ENCODE measurements at regions of chr3 and their contacts with region 1.

Region 1: GRCh38 chr3:112074721-112075497 is 11.3 kb upstream of the C3orf52 start:
- DNase-seq: peak in 8 of 9 donors; percentile 29 to 60 (median 52)
- ATAC-seq: peak; percentile 88
- H3K4me3 ChIP-seq: no peak overlapping the region
- H3K4me3 Mint-ChIP-seq: peak overlapping the region; percentile 32 to 76 (median 56)
- H3K27ac ChIP-seq: peak overlapping the region; percentile 32
- H3K27ac Mint-ChIP-seq: peak overlapping the region; percentile 72 to 95 (median 85)
- H3K4me1 ChIP-seq: peaks cover 4 to 17% of the 10 kb centered on the region in 2 donors
- H3K4me1 Mint-ChIP-seq: peaks cover 17 to 57% (median 51%) of the 10 kb centered on the region in 7 donors
- H3K27me3 ChIP-seq: no peaks in the 10 kb centered on the region
- H3K27me3 Mint-ChIP-seq: peaks cover 0 to 3% (median 0%) of the 10 kb centered on the region in 5 donors

Region 2: GRCh38 chr3:111547631-111548030 is 527.3 kb before region 1 on chr3:
- CTCF ChIA-PET with region 1: no interaction called
- POLR2A ChIA-PET with region 1: interaction called, 3 read pairs
- intact Hi-C with region 1: loop called (anchors 5 to 10 kb)
- DNase-seq: peak in 8 of 9 donors; percentile 44 to 88 (median 82)
- ATAC-seq: peak; percentile 89
- H3K4me3 ChIP-seq: peak overlapping the region; percentile 48
- H3K4me3 Mint-ChIP-seq: no peak overlapping the region
- H3K27ac ChIP-seq: peak overlapping the region; percentile 94
- H3K27ac Mint-ChIP-seq: no peak overlapping the region
- H3K4me1 ChIP-seq: peaks cover 66 to 81% of the 10 kb centered on the region in 2 donors
- H3K4me1 Mint-ChIP-seq: peaks cover 0 to 34% (median 4%) of the 10 kb centered on the region in 7 donors
- H3K27me3 ChIP-seq: no peaks in the 10 kb centered on the region
- H3K27me3 Mint-ChIP-seq: no peaks in the 10 kb centered on the region

Region 3: DNA sequence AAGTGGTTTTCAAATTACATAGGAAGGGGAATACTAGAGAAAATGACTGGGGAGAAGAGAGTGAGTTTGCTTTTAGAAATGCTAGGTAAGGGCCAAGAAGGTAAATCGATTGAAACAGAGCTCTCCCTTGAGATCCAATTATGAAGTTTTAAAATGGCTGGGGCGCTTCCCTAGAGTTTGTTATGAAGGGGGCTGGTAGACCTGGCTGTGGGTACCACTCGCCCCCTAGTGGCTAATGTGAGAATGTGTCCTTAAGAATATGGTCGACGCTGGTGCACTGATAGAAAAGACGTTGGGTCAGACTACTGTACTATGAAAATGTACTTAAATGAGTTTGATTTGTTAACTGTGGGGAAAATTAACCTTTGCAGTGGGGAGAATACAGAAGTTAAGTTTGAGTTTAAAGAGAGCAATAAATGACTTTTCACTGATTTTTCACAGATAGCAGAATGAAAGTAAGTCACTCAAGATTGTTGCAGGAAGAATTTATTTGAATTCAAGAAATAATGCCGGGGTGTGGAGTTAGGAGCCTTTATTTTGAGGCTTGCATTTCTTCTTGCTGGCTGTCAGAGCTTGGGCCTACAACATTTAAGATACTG is 31.2 kb before region 1 on chr3:
- CTCF ChIA-PET with region 1: interaction called, 3 read pairs
- POLR2A ChIA-PET with region 1: no interaction called
- intact Hi-C with region 1: loop called in 1 of 2 experiments (anchors 1 kb)
- DNase-seq: peak in 8 of 9 donors; percentile 29 to 70 (median 58)
- ATAC-seq: peak; percentile 95
- H3K4me3 ChIP-seq: no peak overlapping the region
- H3K4me3 Mint-ChIP-seq: no peak overlapping the region
- H3K27ac ChIP-seq: no peak overlapping the region
- H3K27ac Mint-ChIP-seq: no peak overlapping the region
- H3K4me1 ChIP-seq: no peaks in the 10 kb centered on the region
- H3K4me1 Mint-ChIP-seq: no peaks in the 10 kb centered on the region
- H3K27me3 ChIP-seq: no peaks in the 10 kb centered on the region
- H3K27me3 Mint-ChIP-seq: peaks cover 0 to 3% (median 0%) of the 10 kb centered on the region in 5 donors

Region 4: GRCh38 chr3:112101916-112102315 is 27.0 kb after region 1 on chr3:
- CTCF ChIA-PET with region 1: no interaction called
- POLR2A ChIA-PET with region 1: no interaction called
- intact Hi-C with region 1: no loop called
- DNase-seq: no peak
- ATAC-seq: no peak
- H3K4me3 ChIP-seq: no peak overlapping the region
- H3K4me3 Mint-ChIP-seq: no peak overlapping the region
- H3K27ac ChIP-seq: no peak overlapping the region
- H3K27ac Mint-ChIP-seq: no peak overlapping the region
- H3K4me1 ChIP-seq: no peaks in the 10 kb centered on the region
- H3K4me1 Mint-ChIP-seq: peaks cover 0 to 14% (median 0%) of the 10 kb centered on the region in 7 donors
- H3K27me3 ChIP-seq: no peaks in the 10 kb centered on the region
- H3K27me3 Mint-ChIP-seq: peaks cover 0 to 5% (median 0%) of the 10 kb centered on the region in 5 donors

Region 5: DNA sequence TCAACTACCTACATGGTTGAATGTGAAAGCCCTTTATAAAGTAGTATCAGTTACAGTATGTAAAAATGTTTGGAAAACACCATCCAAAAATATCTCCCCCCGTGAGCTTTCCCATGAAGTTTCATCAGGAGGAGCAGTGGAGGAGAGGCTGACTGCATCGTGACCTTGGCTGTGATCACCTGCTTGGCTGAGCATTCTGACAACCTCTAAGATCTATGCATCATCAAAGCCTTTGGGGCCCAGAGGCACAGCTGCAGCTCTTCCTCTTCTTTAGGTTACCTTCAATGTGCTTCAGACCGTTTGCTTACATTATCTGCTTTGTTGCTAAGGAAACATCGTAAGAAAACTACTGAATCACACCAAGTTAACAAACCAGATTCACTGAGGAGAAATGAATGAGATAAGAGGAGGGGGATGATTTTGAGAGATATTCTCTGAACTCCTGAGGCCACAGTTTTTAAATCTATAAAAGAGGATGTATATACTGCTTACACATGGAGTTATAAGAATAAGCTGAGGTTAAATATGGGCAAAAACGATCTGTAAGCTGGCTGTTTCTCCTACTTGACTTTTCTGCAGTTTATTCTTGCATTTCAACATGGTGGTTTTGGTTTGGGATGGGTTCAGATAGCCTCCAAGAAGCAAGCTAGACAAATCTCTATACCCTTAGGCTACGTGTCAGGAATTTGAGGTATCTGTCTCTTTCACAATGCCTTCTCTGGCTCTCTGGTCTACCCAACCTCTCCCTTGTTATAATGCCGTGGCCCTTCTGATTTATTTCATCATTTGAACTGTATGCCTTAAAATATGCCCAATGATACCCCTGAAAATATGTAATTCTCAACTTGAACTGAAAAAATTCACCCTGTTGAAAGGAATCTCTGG is 54.2 kb after region 1 on chr3:
- CTCF ChIA-PET with region 1: no interaction called
- POLR2A ChIA-PET with region 1: interaction called, 4 read pairs
- intact Hi-C with region 1: loop called in 1 of 2 experiments (anchors 1 kb)
- DNase-seq: peak in 8 of 9 donors; percentile 39 to 88 (median 83)
- ATAC-seq: peak; percentile 82
- H3K4me3 ChIP-seq: no peak overlapping the region
- H3K4me3 Mint-ChIP-seq: peak overlapping the region; percentile 23 to 100 (median 64)
- H3K27ac ChIP-seq: peak overlapping the region; percentile 82
- H3K27ac Mint-ChIP-seq: peak overlapping the region; percentile 87 to 95 (median 93)
- H3K4me1 ChIP-seq: peaks cover 41 to 72% of the 10 kb centered on the region in 2 donors
- H3K4me1 Mint-ChIP-seq: peaks cover 49 to 92% (median 90%) of the 10 kb centered on the region in 7 donors
- H3K27me3 ChIP-seq: no peaks in the 10 kb centered on the region
- H3K27me3 Mint-ChIP-seq: no peaks in the 10 kb centered on the region

Region 6: DNA sequence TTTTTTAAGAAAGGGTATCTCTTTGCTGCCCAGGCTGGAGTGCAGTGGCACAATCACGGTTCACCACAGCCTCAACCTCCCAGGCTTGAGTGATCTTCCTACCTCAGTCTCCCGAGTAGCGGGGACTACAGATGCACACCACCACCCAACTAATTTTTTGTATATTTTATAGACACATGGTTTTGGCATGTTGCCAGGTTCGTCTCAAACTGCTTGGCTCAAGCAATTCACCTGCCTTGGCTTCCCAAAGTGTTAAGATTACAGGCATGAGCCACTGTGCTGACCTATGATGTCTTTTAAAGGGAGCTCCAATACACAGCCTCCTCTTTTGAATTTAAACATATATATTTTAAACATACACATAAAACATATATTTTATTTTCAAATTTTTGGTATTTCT is 158.2 kb after region 1 on chr3:
- CTCF ChIA-PET with region 1: no interaction called
- POLR2A ChIA-PET with region 1: no interaction called
- intact Hi-C with region 1: no loop called
- DNase-seq: no peak
- ATAC-seq: no peak
- H3K4me3 ChIP-seq: no peak overlapping the region
- H3K4me3 Mint-ChIP-seq: no peak overlapping the region
- H3K27ac ChIP-seq: no peak overlapping the region
- H3K27ac Mint-ChIP-seq: no peak overlapping the region
- H3K4me1 ChIP-seq: no peaks in the 10 kb centered on the region
- H3K4me1 Mint-ChIP-seq: no peaks in the 10 kb centered on the region
- H3K27me3 ChIP-seq: no peaks in the 10 kb centered on the region
- H3K27me3 Mint-ChIP-seq: peaks cover 0 to 12% (median 0%) of the 10 kb centered on the region in 5 donors

Measured in naive thymus-derived CD4-positive, alpha-beta T cell (primary cell).